Heart left ventricle (tissue), 16 donors: ENCODE measurements at regions of chr6 and their contacts with region 1.

Region 1: GRCh38 chr6:128339635-128340450 is 180.6 kb downstream of the PTPRK start:
- DNase-seq: no peak
- ATAC-seq: peak in 2 of 4 donors; percentile 53 to 59
- H3K4me3 ChIP-seq: no peak overlapping the region
- H3K27ac ChIP-seq: peak overlapping the region in 9 of 12 donors; percentile 3 to 62 (median 32)
- H3K4me1 ChIP-seq: peaks cover 0 to 33% (median 16%) of the 10 kb centered on the region in 12 donors
- H3K27me3 ChIP-seq: no peaks in the 10 kb centered on the region
- CTCF ChIP-seq: no peak
- POLR2A ChIP-seq: no peak

Region 2: DNA sequence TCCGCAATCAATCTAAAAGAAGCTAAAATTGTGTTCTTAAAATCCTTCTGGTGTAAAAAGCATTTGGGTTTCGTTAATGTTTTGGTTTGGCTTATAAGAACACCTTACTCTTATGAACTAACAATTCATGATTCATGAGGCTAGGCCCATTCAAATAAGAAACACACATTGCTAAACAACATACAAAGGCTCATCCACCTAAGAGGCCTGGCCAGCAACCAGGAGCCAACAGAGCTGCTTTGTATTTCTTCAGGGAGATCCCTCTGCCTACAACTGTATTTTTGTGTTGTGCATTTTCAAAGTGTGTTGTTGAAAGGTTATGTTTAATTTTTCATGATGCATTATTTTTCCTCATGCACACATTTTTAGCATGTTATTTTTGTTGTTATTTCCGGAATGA is 81.9 kb after region 1 on chr6:
- intact Hi-C with region 1: loop called in 1 of 10 experiments (anchors 5 kb)
- DNase-seq: no peak
- ATAC-seq: peak in 1 of 4 donors; percentile 35
- H3K4me3 ChIP-seq: no peak overlapping the region
- H3K27ac ChIP-seq: peak overlapping the region in 1 of 12 donors; percentile 20
- H3K4me1 ChIP-seq: peaks cover 0 to 60% (median 12%) of the 10 kb centered on the region in 12 donors
- H3K27me3 ChIP-seq: no peaks in the 10 kb centered on the region
- CTCF ChIP-seq: no peak
- POLR2A ChIP-seq: no peak

Region 3: DNA sequence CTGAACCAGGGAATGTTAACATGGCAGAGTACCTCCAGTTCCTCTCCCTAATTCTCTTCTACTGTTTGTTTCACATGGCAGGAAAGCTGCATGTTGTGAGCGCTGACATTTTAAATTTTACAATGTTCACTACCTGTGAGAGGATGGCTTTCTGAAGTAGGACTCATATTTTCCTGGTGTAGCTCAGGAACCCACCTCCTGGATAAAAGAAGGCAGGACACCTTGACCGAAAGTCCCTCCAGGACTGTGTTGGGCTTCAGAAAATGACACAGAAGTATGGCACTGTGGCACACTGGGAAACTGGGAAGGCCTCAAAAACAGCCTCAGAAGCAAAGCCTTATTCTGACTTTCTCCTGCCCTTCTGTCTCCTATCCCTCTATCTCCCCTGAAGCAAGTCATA is 147.2 kb after region 1 on chr6:
- intact Hi-C with region 1: loop called in 1 of 10 experiments (anchors 10 kb)
- DNase-seq: no peak
- ATAC-seq: no peak
- H3K4me3 ChIP-seq: no peak overlapping the region
- H3K27ac ChIP-seq: no peak overlapping the region
- H3K4me1 ChIP-seq: peaks cover 5 to 61% (median 25%) of the 10 kb centered on the region in 12 donors
- H3K27me3 ChIP-seq: no peaks in the 10 kb centered on the region
- CTCF ChIP-seq: peak in 4 of 12 donors; percentile 24 to 30 (median 26)
- POLR2A ChIP-seq: no peak